ENCODE measurements at regions of chr11 and their contacts with region 1.

Region 1: DNA sequence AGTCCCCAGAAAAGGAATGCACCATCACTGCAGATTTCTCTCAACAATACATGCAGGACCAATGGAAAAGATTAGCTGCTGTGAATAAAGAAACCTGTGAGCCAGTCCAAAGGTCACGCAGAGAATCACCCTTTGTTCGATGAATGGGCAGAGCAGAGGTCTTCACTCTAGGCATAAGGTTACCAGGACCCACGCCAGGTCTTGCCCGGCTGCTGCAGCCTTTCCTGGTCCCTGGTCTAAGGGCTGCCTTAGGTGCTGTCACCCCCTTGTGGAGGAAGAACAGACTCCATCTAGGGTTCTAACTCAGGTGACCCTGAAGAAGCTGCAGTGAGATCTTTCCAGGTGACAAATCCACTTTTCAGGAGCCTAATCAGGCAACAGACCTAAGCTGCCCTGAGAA is 29.0 kb upstream of the NAP1L4 start:
- DNase-seq: peak; percentile 55
- ATAC-seq: peak; percentile 47
- H3K4me3 Mint-ChIP-seq: no peak overlapping the region
- H3K27ac Mint-ChIP-seq: no peak overlapping the region
- H3K4me1 Mint-ChIP-seq: peaks cover 56% of the 10 kb centered on the region
- H3K27me3 Mint-ChIP-seq: no peaks in the 10 kb centered on the region
- CTCF ChIP-seq: peak; percentile 54

Region 2: DNA sequence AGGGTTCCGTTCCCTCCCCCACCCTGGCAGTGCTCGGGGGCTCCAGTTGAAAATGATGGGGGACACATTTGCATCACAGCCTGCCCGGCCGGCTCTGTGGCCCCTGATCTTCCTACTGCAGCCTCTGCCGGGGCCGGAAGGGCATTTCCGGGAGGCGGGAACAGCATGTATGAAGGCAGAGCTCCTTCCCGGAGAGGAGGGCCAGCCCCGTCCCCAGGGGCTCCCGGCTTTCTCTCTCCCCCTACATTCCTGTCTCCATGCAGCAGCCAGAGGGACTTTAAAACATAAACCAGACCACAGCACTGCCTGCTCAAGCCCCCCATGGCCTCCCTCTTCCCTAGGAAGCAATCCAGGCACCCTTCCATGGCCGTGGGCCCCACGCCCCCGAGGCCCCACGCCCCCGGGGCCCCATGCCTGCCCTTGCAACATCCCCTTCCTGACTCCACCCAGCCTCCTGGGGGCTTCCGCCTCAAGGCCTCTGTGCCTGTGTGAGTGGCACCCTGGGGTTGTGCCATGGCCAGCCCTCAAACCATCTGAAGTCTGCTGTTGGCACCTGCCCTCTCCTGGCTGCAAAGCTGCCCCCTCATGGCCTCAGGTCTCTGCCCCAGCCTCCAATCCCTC is 208.6 kb before region 1 on chr11:
- CTCF ChIA-PET with region 1: no interaction called
- POLR2A ChIA-PET with region 1: no interaction called
- intact Hi-C with region 1: no loop called
- DNase-seq: peak; percentile 30
- ATAC-seq: peak; percentile 47
- H3K4me3 Mint-ChIP-seq: peak overlapping the region; percentile 43
- H3K27ac Mint-ChIP-seq: peak overlapping the region; percentile 92
- H3K4me1 Mint-ChIP-seq: peaks cover 36% of the 10 kb centered on the region
- H3K27me3 Mint-ChIP-seq: no peaks in the 10 kb centered on the region
- CTCF ChIP-seq: no peak

Region 3: DNA sequence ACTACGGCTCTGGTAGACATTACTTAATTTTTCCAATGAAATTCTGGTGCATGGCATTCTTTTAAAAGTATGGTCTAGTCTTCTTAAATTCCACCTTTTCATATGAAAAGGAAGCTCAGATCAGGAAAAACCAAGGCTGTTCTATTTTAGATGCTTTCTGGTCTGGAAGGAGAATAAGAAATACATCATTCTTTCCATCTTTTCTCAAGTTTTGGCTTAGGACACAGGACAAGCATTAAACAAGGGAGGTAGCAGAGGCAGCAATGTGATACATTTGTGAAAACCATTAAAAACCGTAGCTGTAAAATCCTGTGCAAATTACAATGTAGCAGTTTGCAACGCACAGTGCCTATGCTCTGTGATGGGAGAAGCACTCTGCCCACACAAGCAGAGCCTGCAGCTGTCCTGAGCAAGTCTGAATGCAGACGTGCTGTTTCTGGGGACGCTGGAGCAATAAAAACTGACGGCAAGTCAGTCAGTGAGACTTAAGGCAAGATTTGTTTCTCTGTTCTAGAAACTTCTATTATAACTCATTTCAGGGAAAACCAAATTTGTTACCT is 52.7 kb before region 1 on chr11:
- CTCF ChIA-PET with region 1: interaction called, 46 read pairs
- POLR2A ChIA-PET with region 1: no interaction called
- intact Hi-C with region 1: no loop called
- DNase-seq: no peak
- ATAC-seq: no peak
- H3K4me3 Mint-ChIP-seq: no peak overlapping the region
- H3K27ac Mint-ChIP-seq: no peak overlapping the region
- H3K4me1 Mint-ChIP-seq: peaks cover 30% of the 10 kb centered on the region
- H3K27me3 Mint-ChIP-seq: no peaks in the 10 kb centered on the region
- CTCF ChIP-seq: no peak

Region 4: GRCh38 chr11:2975594-2975993 is 45.5 kb before region 1 on chr11:
- CTCF ChIA-PET with region 1: interaction called, 46 read pairs
- POLR2A ChIA-PET with region 1: interaction called, 11 read pairs
- intact Hi-C with region 1: loop called (anchors 5 kb)
- DNase-seq: peak; percentile 57
- ATAC-seq: peak; percentile 94
- H3K4me3 Mint-ChIP-seq: no peak overlapping the region
- H3K27ac Mint-ChIP-seq: peak overlapping the region; percentile 8
- H3K4me1 Mint-ChIP-seq: peaks cover 44% of the 10 kb centered on the region
- H3K27me3 Mint-ChIP-seq: no peaks in the 10 kb centered on the region
- CTCF ChIP-seq: peak; percentile 59

Region 5: DNA sequence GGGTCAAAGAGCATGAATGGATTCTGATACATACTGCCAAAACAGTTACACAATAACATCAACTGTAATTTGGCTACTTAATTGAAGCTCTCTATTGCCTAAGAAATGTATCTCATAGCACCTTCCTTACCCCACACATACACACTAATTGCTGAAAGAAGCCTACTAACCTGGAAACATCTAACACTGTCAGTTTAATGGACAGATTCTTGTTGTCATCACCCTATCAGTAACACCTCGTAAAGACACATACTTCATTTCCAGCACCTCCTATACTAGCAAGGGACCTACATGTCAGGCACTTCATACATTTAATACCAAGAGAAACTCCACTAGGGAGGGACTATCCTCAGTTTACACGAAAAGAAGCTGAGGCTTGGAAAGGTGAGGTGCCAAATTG is 38.9 kb before region 1 on chr11:
- CTCF ChIA-PET with region 1: interaction called, 33 read pairs
- POLR2A ChIA-PET with region 1: interaction called, 3 read pairs
- intact Hi-C with region 1: loop called (anchors 5 kb)
- DNase-seq: no peak
- ATAC-seq: peak; percentile 18
- H3K4me3 Mint-ChIP-seq: no peak overlapping the region
- H3K27ac Mint-ChIP-seq: peak overlapping the region; percentile 50
- H3K4me1 Mint-ChIP-seq: peaks cover 58% of the 10 kb centered on the region
- H3K27me3 Mint-ChIP-seq: no peaks in the 10 kb centered on the region
- CTCF ChIP-seq: no peak